ENCODE measurements at regions of chr2 and their contacts with region 1.

Region 1: DNA sequence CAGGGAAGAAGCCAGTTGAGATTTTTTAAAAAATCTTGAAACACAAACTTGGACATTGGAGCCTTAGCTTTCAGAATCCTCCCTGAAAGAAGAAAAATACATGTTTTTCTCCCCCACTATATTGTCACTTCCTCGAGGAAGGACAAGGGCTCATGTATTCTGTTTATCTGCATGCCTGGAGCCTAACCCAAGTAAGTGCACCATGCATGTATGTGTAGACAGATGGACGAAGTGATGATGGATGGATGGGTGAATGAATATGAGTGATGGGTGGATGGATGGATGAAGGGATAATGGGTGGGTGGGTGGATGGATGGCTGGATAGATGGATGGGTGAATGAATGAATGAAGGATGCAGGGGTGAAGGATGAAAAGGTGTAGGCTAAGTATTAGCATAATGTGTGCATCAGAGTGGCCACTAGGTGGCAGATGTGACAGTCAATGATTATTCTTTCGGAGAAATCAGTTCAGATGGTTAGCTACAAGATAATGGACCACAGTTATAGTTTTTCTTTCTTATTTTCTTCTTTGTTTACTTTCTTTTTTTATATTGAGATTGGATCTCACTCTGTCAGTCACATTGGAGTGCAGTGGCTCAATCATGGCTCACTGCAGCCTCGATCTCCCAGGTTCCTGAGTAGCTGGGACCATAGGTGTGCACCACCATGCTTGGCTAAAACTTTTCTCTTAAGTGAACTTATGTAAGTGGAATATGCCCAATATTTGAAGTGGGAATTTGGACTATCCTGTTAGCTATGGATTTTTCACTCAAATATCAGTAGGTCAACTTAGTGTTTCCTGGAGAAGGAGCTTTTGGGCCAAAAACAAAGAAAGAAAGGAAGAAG is 18.5 kb upstream of the CCDC93 start:
- DNase-seq: no peak
- ATAC-seq: peak; percentile 95
- H3K4me3 ChIP-seq: no peak overlapping the region
- H3K27ac ChIP-seq: no peak overlapping the region
- H3K4me1 ChIP-seq: no peaks in the 10 kb centered on the region
- H3K27me3 ChIP-seq: no peaks in the 10 kb centered on the region; a peak in 1 of 4 replicates
- CTCF ChIP-seq: peak; percentile 73 to 90 (median 74)
- EP300 ChIP-seq: no peak
- POLR2A ChIP-seq: no peak
- RAD21 ChIP-seq: peak; percentile 38

Region 2: GRCh38 chr2:117794668-117795067 is 237.7 kb before region 1 on chr2:
- CTCF ChIA-PET with region 1: no interaction called
- POLR2A ChIA-PET with region 1: no interaction called
- RAD21 ChIA-PET with region 1: no interaction called
- SMC1A ChIA-PET with region 1: no interaction called
- in situ Hi-C with region 1: no loop called
- intact Hi-C with region 1: no loop called
- DNase-seq: no peak
- ATAC-seq: no peak
- H3K4me3 ChIP-seq: no peak overlapping the region
- H3K27ac ChIP-seq: no peak overlapping the region
- H3K4me1 ChIP-seq: no peaks in the 10 kb centered on the region
- H3K27me3 ChIP-seq: no peaks in the 10 kb centered on the region
- CTCF ChIP-seq: no peak
- EP300 ChIP-seq: no peak
- POLR2A ChIP-seq: no peak
- RAD21 ChIP-seq: no peak

Region 3: DNA sequence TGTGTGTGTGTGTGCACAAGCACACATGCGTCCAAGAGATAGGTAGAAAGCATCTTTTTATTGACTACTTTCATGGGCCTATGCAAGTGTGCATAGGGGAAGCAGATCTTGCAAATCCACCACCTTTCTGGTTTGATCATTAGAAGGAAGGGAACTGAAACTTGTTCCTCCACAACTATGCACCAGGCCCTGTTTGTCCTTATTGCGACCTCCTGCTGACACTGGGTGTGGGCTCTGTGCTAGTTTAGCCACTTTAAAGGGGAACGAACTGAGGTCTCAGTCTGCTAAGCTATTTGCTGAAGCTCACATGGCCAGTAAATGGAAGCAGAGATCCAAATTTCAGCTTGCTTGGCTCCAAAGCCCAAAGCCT is 23.8 kb after region 1 on chr2:
- CTCF ChIA-PET with region 1: interaction called, 143 read pairs
- POLR2A ChIA-PET with region 1: no interaction called
- RAD21 ChIA-PET with region 1: interaction called, 12 read pairs
- SMC1A ChIA-PET with region 1: interaction called, 64 read pairs
- in situ Hi-C with region 1: no loop called
- intact Hi-C with region 1: loop called (anchors 1 kb)
- DNase-seq: peak; percentile 86
- ATAC-seq: peak; percentile 92
- H3K4me3 ChIP-seq: peak overlapping the region; percentile 56
- H3K27ac ChIP-seq: peak overlapping the region; percentile 73
- H3K4me1 ChIP-seq: peaks cover 39% of the 10 kb centered on the region
- H3K27me3 ChIP-seq: no peaks in the 10 kb centered on the region
- CTCF ChIP-seq: no peak
- EP300 ChIP-seq: peak; percentile 72 to 90
- POLR2A ChIP-seq: no peak
- RAD21 ChIP-seq: no peak

Region 4: GRCh38 chr2:118061135-118061955 is 29.0 kb after region 1 on chr2:
- CTCF ChIA-PET with region 1: interaction called, 143 read pairs
- POLR2A ChIA-PET with region 1: no interaction called
- RAD21 ChIA-PET with region 1: interaction called, 12 read pairs
- SMC1A ChIA-PET with region 1: interaction called, 64 read pairs
- in situ Hi-C with region 1: no loop called
- intact Hi-C with region 1: loop called (anchors 1 kb)
- DNase-seq: peak; percentile 57
- ATAC-seq: peak; percentile 87
- H3K4me3 ChIP-seq: no peak overlapping the region
- H3K27ac ChIP-seq: no peak overlapping the region
- H3K4me1 ChIP-seq: peaks cover 27% of the 10 kb centered on the region
- H3K27me3 ChIP-seq: no peaks in the 10 kb centered on the region
- CTCF ChIP-seq: peak; percentile 67 to 76 (median 68)
- EP300 ChIP-seq: no peak
- POLR2A ChIP-seq: no peak
- RAD21 ChIP-seq: peak; percentile 98

Region 5: DNA sequence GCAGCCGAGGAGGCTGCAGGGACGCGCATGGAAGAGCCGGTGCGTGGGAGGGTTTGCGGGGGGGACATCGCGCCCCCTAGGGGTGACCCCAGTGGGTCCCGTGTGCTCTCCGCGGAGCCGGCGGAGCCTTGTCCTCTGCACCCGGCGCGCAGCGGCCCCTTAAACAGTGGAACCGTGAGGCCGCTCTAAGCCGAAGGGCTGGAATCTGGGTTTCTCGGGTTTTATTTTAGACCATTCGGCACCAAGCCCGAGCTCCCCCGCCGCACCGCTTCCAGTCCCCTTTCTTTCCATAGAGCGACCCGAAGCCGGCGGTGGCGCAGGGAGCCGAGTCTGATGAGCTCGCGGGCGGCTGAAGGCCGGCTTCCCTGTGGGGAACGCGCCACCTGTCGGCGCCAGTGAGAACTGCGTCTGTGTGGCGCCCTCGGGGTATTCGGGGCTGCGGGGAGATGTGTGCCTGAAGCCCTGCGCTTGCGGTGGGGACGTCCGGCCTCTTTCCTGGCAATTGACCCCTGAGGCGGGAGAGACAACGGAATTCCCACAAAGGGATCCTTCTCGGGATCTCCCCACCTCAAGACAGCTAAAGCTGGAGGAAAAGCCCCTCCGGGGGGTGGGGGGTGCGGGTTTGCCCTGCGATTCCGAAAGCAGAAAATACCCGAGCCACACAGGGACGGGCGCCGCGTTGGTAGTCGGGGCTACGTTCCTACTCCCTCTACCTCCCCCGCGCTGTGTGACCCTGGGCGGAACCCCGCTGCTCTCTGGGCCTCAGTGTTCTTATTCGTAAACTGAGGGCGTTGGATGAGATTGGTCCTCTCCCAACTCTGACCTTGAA is 823.3 kb after region 1 on chr2:
- CTCF ChIA-PET with region 1: interaction called, 10 read pairs
- POLR2A ChIA-PET with region 1: no interaction called
- RAD21 ChIA-PET with region 1: interaction called, 5 read pairs
- SMC1A ChIA-PET with region 1: no interaction called
- in situ Hi-C with region 1: loop called (anchors 25 kb)
- intact Hi-C with region 1: no loop called
- DNase-seq: no peak
- ATAC-seq: peak; percentile 98
- H3K4me3 ChIP-seq: no peak overlapping the region; the same call in 1 of the 2 replicates
- H3K27ac ChIP-seq: no peak overlapping the region
- H3K4me1 ChIP-seq: no peaks in the 10 kb centered on the region
- H3K27me3 ChIP-seq: peaks cover 18 to 35% of the 10 kb centered on the region in 2 experiments
- CTCF ChIP-seq: peak; percentile 88 to 94 (median 88)
- EP300 ChIP-seq: no peak
- POLR2A ChIP-seq: no peak
- RAD21 ChIP-seq: peak; percentile 81